ENCODE measurements at regions of chr5 and their contacts with region 1.

Region 1: GRCh38 chr5:94111209-94112004 is 370.0 kb upstream of the POU5F2 start:
- DNase-seq: peak; percentile 96
- H3K4me3 Mint-ChIP-seq: peak overlapping the region; percentile 89
- H3K27ac Mint-ChIP-seq: peak overlapping the region; percentile 84
- H3K4me1 Mint-ChIP-seq: peaks cover 22% of the 10 kb centered on the region
- H3K27me3 Mint-ChIP-seq: peaks cover 7% of the 10 kb centered on the region

Region 2: DNA sequence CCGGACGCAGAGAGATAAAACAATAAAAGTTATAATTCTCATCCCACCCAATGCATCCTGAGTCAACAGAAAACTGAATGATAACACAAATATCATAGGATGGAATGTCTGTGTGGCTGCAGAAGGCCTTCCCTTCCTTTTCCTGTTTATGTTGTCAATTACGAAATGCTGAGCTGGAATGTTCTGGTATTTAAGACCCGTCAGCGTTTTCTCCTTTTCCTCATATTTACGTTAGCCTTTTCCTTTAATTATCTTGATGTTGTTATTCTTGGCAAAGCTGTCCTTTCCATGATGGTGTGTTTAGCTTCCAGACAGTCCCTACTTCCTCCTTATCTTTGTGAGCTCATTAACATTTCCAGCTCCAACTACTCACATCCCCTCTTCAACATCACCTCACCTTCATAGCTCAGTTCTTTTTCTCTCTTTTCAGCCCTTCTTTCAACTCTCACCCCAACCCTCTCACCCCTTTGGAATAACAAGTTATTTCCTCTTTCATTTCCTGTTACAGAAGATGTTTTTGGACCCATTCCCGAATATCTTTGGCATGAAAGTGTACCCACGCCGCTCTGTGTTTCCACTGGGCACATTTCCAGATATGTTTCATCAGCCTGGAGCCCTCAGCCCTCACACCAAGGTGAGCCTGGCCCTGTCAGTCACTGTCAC is 752.0 kb before region 1 on chr5:
- CTCF ChIA-PET with region 1: no interaction called
- intact Hi-C with region 1: no loop called
- DNase-seq: no peak
- H3K4me3 Mint-ChIP-seq: no peak overlapping the region
- H3K27ac Mint-ChIP-seq: no peak overlapping the region
- H3K4me1 Mint-ChIP-seq: no peaks in the 10 kb centered on the region
- H3K27me3 Mint-ChIP-seq: no peaks in the 10 kb centered on the region

Region 3: DNA sequence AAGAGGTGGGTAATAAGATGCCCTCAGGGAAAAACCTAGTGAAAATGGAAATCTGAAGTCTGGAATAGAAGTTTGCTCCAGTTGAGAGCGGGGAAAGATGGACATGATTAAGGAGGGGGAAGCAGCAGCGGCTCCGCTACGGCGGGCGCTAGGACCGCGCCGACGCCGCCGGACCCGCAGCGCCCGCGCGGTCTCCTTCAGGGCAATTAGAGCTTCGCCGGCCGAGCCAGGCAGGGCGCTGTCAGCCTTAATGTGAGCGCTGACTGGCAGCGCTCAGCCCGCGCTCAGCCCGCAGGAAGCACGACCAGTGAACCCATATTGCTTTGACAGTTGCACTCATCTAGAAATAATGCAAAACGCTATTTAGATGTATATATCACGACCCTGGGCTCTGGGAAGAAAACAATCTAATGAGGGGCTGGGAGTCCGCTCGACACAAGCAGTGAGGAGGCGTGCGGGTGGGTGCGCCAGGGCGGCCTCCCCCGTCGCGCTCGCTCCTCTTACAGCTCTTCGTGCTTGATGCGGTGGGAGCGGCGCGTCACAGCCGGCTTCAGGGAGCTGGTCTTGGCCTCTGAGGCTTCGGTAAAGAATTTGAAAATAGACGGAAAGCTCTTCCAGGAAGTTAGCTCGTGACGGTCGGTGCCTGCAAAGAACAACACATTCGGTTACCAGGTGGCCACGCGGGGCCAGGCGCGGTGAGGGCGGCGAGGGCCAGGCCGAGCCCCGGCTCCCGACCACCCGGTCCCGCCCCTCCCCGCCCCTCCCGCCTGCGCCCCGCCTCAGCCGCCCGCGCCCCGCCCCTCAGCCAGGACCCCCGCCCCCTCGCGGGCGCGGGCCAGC is 490.7 kb before region 1 on chr5:
- CTCF ChIA-PET with region 1: no interaction called
- intact Hi-C with region 1: loop called (anchors 10 kb)
- DNase-seq: peak; percentile 64
- H3K4me3 Mint-ChIP-seq: peak overlapping the region; percentile 76
- H3K27ac Mint-ChIP-seq: no peak overlapping the region
- H3K4me1 Mint-ChIP-seq: peaks cover 24% of the 10 kb centered on the region
- H3K27me3 Mint-ChIP-seq: peaks cover 43% of the 10 kb centered on the region

Region 4: DNA sequence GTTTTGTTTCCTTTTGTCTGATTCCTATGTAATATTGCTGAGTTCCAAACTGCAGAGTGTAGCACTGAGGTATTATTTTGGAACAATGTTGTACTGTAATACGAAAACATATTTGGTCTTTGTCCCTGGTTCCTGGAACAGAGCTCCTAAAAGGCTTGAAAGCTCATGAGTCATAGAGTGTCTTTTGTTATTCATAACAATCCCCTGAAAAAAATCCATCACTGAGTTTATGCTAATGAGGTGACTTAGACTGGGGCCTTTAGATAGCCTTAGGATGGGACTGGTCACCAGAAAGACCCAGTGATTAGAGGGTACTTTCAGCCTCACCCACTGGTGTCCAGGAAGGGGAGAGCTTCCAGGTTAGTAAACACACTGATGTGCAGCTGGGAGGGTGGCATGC is 237.3 kb before region 1 on chr5:
- CTCF ChIA-PET with region 1: no interaction called
- intact Hi-C with region 1: loop called (anchors 5 kb)
- DNase-seq: no peak
- H3K4me3 Mint-ChIP-seq: no peak overlapping the region
- H3K27ac Mint-ChIP-seq: no peak overlapping the region
- H3K4me1 Mint-ChIP-seq: peaks cover 15% of the 10 kb centered on the region
- H3K27me3 Mint-ChIP-seq: no peaks in the 10 kb centered on the region

Region 5: DNA sequence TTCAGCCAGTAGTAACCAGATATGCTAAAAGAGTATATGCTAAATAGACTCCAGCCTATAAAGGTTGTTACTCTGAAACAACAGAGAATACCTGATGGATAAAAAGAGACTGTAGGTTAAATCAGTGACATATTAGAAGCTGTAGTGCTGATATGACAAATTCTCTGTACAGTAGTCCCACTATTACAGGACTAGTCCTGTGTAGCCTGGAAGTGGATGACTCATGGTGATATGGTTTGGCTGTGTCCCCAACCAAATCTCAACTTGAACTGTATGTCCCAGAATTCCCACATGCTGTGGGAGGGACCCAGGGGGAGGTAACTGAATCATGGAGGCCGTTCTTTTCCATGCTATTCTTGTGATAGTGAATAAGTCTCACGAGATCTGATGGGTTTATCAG is 93.8 kb before region 1 on chr5:
- CTCF ChIA-PET with region 1: no interaction called
- intact Hi-C with region 1: loop called (anchors 5 kb)
- DNase-seq: no peak
- H3K4me3 Mint-ChIP-seq: no peak overlapping the region
- H3K27ac Mint-ChIP-seq: no peak overlapping the region
- H3K4me1 Mint-ChIP-seq: no peaks in the 10 kb centered on the region
- H3K27me3 Mint-ChIP-seq: no peaks in the 10 kb centered on the region

Region 6: DNA sequence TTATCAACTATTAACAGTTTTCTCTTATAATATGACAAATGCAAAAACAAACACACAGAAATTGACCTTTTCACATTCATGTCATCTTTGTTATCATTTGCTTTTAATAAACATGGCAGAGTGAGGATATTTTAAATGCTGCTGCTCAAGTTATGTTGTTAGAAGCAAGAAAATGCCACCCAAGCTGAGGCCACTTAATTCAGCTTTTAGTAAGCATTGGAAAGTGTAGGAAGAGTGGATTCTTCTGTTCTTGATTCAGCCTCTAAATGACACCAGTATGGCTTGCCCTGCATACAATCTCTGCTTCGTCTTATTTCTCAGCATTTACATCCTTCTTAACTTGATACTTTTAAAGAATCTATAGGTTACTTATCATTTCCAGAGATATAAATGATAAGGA is 50.4 kb after region 1 on chr5:
- CTCF ChIA-PET with region 1: no interaction called
- intact Hi-C with region 1: no loop called
- DNase-seq: no peak
- H3K4me3 Mint-ChIP-seq: no peak overlapping the region
- H3K27ac Mint-ChIP-seq: no peak overlapping the region
- H3K4me1 Mint-ChIP-seq: no peaks in the 10 kb centered on the region
- H3K27me3 Mint-ChIP-seq: peaks cover 4% of the 10 kb centered on the region

Region 7: DNA sequence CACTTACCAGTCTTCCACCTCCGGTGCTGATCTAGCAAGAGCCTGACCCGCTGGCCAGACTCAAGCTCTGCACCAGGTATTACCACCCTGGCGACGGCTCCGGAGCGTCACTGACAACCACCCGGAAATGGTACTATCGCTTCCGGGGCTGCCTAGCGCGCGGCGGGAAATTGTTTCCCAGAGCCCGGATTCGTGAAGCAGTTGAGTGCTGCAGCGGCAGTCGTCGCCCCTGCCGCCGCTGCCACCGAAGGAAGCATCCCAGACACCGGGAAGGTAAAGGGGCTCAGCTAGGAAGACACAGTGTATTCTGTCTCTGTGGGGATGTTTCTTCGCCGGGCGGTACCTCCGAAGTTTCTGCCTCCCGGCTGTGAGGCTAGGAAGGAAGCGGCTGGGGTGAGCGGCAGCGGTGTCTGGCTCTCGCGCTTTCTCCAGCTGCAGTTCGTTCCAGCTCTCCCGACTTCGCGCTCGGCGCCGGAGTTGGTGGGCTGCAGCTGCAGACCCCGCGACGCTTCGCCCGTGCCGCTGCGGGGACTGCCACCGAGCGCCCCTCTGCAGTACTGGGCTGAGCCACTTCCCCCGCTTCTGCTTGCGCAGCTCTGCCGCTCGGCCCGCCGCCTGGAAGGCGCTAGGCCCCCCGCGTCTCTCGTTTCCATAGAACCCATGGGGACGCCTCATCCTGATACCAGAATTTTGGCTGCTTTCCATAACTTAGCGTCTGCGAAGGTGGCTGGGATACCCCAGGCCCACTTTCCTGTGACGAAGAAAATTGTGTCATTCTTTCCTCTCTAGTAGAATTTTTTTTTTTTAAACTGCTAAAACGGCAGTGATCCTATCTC is 507.3 kb after region 1 on chr5 and contains the starts of genes KIAA0825 and SLF1:
- CTCF ChIA-PET with region 1: no interaction called
- intact Hi-C with region 1: loop called (anchors 1 kb)
- DNase-seq: peak; percentile 93
- H3K4me3 Mint-ChIP-seq: peak within 1 kb of the TSS; percentile 96
- H3K27ac Mint-ChIP-seq: peak within 1 kb of the TSS; percentile 93
- H3K4me1 Mint-ChIP-seq: peaks cover 34% of the 10 kb centered on the region
- H3K27me3 Mint-ChIP-seq: no peaks in the 10 kb centered on the region
- total RNA-seq, gene KIAA0825: 0.07 to 0.24 TPM
- total RNA-seq, gene SLF1: 12.4 to 12.8 TPM

Measured in activated naive CD4-positive, alpha-beta T cell treated with anti-CD3 and anti-CD28 coated beads for 36 hours (primary cell).